ENCODE measurements at regions of chr3 and their contacts with region 1.

Region 1: GRCh38 chr3:45043728-45044299 is 17.7 kb downstream of the CLEC3B start:
- DNase-seq: no peak
- H3K4me3 Mint-ChIP-seq: no peak overlapping the region
- H3K27ac Mint-ChIP-seq: no peak overlapping the region
- H3K4me1 Mint-ChIP-seq: peaks cover 26% of the 10 kb centered on the region
- H3K27me3 Mint-ChIP-seq: peaks cover 67% of the 10 kb centered on the region

Region 2: DNA sequence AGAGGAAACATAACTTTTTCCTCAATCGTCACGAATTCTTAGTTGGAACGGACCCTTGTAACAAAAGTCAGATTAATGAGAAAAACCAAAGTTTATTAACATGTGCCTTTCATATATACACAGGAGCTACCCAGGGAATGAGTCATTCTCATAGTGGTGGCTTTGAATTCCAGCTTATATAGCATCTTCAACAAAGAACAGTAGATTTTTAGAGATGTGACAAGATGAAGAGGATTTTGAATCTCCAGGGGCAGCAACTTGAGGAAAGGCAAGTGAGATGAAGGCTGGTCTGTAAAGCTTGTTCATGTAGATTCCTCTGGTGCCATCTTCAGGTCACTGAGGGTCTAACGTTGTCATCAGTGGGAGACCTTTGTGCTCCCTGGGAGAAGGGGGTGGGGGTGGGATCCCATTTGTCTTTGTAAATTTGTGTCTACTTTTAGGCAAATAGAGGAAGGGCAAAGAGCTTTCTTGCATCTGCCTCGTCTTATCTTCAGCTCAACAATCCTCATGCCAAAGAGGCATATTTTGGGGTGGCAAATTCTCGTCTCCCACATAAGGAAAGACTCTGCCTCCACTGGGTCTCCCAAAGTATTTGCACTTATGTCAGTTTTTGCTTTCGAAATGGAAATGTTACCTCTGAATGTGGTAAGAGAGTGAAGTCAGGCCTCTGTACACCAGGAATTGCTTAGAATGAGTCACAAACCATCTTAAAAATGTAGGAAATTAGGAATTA is 11.8 kb after region 1 on chr3:
- CTCF ChIA-PET with region 1: interaction called, 49 read pairs
- DNase-seq: peak; percentile 43
- H3K4me3 Mint-ChIP-seq: no peak overlapping the region
- H3K27ac Mint-ChIP-seq: no peak overlapping the region
- H3K4me1 Mint-ChIP-seq: peaks cover 27% of the 10 kb centered on the region
- H3K27me3 Mint-ChIP-seq: peaks cover 67% of the 10 kb centered on the region

Region 3: DNA sequence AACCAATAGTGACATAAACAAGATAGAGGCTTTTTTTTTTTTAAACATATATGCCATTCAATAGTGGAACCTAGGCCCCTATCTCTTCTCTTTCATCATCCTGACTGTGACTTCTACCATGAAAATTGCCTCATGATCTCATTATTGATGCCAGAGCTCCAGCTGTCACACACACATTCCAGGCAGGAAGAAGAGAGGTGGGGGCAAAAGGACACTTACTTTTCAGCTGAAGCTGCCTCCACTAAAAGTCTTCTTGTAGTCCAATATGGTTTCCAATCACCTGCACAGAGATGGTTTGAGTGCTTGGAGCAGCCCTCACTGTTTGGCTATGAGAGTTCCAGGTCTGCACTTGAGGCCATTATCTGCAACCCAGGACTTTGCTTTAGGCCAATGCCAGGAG is 27.3 kb after region 1 on chr3:
- CTCF ChIA-PET with region 1: no interaction called
- DNase-seq: no peak
- H3K4me3 Mint-ChIP-seq: no peak overlapping the region
- H3K27ac Mint-ChIP-seq: no peak overlapping the region
- H3K4me1 Mint-ChIP-seq: peaks cover 5% of the 10 kb centered on the region
- H3K27me3 Mint-ChIP-seq: peaks cover 56% of the 10 kb centered on the region

Region 4: DNA sequence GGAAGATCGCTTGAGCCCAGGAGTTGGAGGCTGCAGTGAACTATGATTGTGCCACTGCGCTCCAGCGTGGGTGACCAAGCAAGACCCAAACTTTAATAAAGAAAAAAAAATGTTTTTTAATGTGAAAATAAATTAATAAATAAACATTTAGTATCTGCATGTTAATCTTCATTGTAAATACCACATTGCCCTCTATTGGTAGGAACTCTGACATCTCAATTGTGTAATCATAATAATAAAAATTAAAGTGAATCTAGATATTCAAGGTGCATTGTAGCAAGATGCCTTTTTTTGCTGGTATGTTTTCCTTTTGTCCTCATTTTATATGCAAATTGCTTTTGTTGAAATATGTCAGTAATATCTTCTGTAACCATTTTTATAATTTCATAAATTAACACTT is 455.7 kb after region 1 on chr3:
- CTCF ChIA-PET with region 1: interaction called, 25 read pairs
- DNase-seq: no peak
- H3K4me3 Mint-ChIP-seq: no peak overlapping the region
- H3K27ac Mint-ChIP-seq: no peak overlapping the region
- H3K4me1 Mint-ChIP-seq: peaks cover 21% of the 10 kb centered on the region
- H3K27me3 Mint-ChIP-seq: no peaks in the 10 kb centered on the region

Region 5: DNA sequence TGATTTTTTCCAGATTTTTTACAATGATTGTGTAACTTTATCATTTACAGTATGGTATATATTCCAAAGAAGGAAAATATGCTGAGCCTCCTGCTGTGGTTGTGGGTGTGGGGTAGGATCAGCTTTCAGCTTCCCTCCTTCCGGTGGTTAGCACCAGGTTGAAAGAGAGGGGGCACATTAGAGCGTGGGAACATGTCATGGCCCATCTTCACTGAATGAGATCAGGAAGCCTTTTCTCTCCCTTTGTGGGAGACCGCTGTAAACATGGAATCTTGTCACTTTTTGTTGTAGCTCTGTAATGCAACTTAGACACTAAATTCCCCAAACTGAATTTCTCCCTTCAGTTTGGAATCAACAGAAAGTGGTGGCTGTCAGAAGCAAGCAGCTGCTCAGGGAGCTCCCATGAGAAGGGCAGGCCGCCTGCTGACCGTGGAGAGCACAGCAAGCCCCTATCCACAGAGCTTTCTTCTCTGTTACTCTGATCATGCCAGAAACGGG is 464.1 kb after region 1 on chr3:
- CTCF ChIA-PET with region 1: interaction called, 39 read pairs
- DNase-seq: no peak
- H3K4me3 Mint-ChIP-seq: no peak overlapping the region
- H3K27ac Mint-ChIP-seq: no peak overlapping the region
- H3K4me1 Mint-ChIP-seq: no peaks in the 10 kb centered on the region
- H3K27me3 Mint-ChIP-seq: no peaks in the 10 kb centered on the region